H1 (cell line): ENCODE measurements at regions of chr1 and their contacts with region 1.

Region 1: GRCh38 chr1:65265651-65266351 is 43.5 kb upstream of the DNAJC6 start:
- DNase-seq: peak in 1 of 2 experiments; percentile 83
- H3K4me3 ChIP-seq: peak overlapping the region; percentile 41 to 73 (median 50)
- H3K27ac ChIP-seq: peak overlapping the region; percentile 12; the same call in 1 of the 2 replicates
- H3K4me1 ChIP-seq: peaks cover 0 to 5% (median 3%) of the 10 kb centered on the region in 4 experiments; a peak in 5 of 7 replicates
- H3K27me3 ChIP-seq: no peaks in the 10 kb centered on the region; a peak in 3 of 7 replicates
- CTCF ChIP-seq: peak; percentile 49 to 66 (median 54)
- EP300 ChIP-seq: 0 out of 3 replicates have a peak, but pooled peaks of 1 of the 2 experiments have one; percentile 6
- POLR2A ChIP-seq: peak in 1 of 2 experiments; percentile 80; a peak in 2 of 3 replicates
- RAD21 ChIP-seq: peak; percentile 32 to 51; a peak in 3 of 4 replicates

Region 2: DNA sequence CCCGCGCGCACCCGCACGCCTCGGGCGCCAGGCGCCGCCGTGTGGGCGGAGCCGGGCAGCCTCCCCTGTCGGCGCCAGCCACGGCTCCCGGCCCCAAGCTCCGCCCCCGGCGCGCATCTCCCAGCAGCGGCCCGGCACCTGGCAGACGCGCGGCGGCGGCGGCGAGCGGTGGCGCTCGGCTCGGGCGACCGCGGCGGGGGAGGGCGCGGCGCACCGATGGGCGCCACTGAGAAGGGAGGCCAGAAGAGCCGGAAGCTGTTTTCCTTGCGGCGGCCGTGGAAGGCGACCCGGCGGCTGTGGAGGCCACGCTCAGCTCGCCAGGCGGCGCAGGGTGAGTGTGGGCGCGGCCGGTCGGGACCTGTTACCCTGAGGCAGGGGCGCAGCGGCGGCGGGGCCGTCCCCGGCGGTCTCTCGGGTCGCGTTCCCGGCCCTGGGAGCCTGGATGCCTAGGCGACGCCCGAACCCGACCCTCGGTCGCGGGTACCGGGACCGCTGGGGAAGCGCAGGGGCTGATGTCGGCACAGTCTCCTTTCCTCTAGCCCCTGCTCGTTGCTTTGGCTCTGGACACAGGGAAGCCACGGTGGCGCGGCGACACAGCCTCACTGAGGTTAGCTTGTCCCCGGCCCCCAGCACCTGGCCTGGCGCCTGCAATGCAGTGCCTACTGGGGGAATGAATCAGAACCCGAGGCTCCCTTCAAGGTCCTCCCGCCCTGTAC is 11.3 kb before region 1 on chr1:
- CTCF ChIA-PET with region 1: interaction called, 5 read pairs
- POLR2A ChIA-PET with region 1: interaction called, 10 read pairs
- DNase-seq: peak in 1 of 2 experiments; percentile 92
- H3K4me3 ChIP-seq: peak overlapping the region; percentile 59 to 75 (median 66)
- H3K27ac ChIP-seq: no peak overlapping the region
- H3K4me1 ChIP-seq: peaks cover 1 to 9% (median 3%) of the 10 kb centered on the region in 4 experiments; a peak in 5 of 7 replicates
- H3K27me3 ChIP-seq: peaks cover 0 to 18% (median 12%) of the 10 kb centered on the region in 4 experiments; a peak in 6 of 7 replicates
- CTCF ChIP-seq: no peak
- EP300 ChIP-seq: peak in 1 of 2 experiments; percentile 27; a peak in 1 of 3 replicates
- POLR2A ChIP-seq: peak in 1 of 2 experiments; percentile 64; a peak in 2 of 3 replicates
- RAD21 ChIP-seq: peak in 1 of 2 experiments; percentile 19; a peak in 1 of 4 replicates

Region 3: DNA sequence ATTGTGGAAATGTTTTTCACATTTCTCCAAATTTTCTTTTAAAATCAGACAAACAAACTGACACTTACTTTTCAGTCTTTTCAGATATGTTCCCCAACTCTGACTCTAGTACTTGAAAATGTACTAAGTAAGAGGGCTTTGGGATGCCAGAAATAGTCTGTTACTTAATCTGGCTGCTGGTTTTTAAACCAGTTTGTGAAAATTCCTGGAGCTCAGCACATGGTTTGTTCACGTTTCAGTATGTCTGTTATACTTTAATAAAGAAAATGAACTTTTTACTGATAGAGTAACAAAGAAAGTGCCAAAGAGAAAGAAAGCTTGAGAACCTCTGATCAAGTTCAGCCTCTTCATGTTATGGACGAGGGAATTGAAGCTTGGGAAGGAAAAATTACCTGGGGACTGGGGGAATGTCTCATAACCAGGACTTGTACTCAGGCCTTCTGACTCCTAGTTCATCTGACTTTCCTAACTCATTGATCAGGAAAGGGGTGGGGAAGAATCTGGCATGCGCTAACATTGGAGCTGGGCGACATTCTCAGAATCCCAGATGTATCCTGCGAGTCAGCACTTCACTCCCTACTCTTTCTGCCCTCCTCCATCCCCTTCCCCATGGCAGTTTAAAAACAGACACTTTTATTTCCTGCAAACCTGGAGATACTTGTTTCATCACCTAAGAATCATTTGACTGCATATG is 12.7 kb after region 1 on chr1:
- CTCF ChIA-PET with region 1: interaction called, 17 read pairs
- POLR2A ChIA-PET with region 1: interaction called, 6 read pairs
- DNase-seq: no peak
- H3K4me3 ChIP-seq: peak overlapping the region; percentile 6 to 56 (median 25); a peak in 7 of 8 replicates
- H3K27ac ChIP-seq: no peak overlapping the region
- H3K4me1 ChIP-seq: peaks cover 0 to 22% (median 8%) of the 10 kb centered on the region in 4 experiments; a peak in 3 of 7 replicates
- H3K27me3 ChIP-seq: no peaks in the 10 kb centered on the region
- CTCF ChIP-seq: no peak
- EP300 ChIP-seq: no peak
- POLR2A ChIP-seq: no peak
- RAD21 ChIP-seq: no peak